ENCODE measurements at regions of chr19 and their contacts with region 1.

Region 1: DNA sequence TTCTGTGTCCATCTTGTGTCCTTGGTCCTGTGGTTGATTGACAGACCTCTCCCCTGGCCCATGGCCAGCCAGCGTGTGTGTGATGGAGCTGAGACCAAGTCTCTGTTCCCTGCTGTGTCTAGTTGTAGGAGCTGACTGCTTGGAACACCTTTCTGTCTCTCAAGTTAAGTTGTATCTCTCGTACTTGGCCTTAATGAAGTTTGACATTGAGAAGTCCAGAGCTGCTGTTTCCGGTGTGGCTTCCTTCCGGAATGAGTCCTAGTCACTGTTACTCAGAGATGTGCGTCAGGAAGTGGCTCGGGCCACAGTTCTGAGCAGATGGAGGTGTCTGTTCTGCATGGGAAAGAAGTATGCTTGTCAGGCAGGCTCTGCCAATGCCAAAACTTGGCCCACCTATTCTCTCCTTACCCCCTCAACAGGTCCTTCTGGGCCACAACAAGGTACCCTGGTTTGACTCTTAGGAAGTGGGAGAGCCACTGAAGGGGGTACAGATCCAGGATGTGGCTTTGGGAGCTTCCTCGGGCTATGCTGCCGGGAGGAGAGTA is 54.3 kb downstream of the GATAD2A start:
- DNase-seq: peak; percentile 80
- H3K4me3 Mint-ChIP-seq: peak overlapping the region; percentile 80
- H3K27ac Mint-ChIP-seq: peak overlapping the region; percentile 98
- H3K4me1 Mint-ChIP-seq: peaks cover 74% of the 10 kb centered on the region
- H3K27me3 Mint-ChIP-seq: no peaks in the 10 kb centered on the region

Region 2: GRCh38 chr19:19444681-19445155 is 15.1 kb before region 1 on chr19:
- CTCF ChIA-PET with region 1: interaction called, 5 read pairs
- POLR2A ChIA-PET with region 1: interaction called, 64 read pairs
- DNase-seq: peak; percentile 62
- H3K4me3 Mint-ChIP-seq: peak overlapping the region; percentile 40
- H3K27ac Mint-ChIP-seq: peak overlapping the region; percentile 89
- H3K4me1 Mint-ChIP-seq: peaks cover 65% of the 10 kb centered on the region
- H3K27me3 Mint-ChIP-seq: no peaks in the 10 kb centered on the region

Region 3: DNA sequence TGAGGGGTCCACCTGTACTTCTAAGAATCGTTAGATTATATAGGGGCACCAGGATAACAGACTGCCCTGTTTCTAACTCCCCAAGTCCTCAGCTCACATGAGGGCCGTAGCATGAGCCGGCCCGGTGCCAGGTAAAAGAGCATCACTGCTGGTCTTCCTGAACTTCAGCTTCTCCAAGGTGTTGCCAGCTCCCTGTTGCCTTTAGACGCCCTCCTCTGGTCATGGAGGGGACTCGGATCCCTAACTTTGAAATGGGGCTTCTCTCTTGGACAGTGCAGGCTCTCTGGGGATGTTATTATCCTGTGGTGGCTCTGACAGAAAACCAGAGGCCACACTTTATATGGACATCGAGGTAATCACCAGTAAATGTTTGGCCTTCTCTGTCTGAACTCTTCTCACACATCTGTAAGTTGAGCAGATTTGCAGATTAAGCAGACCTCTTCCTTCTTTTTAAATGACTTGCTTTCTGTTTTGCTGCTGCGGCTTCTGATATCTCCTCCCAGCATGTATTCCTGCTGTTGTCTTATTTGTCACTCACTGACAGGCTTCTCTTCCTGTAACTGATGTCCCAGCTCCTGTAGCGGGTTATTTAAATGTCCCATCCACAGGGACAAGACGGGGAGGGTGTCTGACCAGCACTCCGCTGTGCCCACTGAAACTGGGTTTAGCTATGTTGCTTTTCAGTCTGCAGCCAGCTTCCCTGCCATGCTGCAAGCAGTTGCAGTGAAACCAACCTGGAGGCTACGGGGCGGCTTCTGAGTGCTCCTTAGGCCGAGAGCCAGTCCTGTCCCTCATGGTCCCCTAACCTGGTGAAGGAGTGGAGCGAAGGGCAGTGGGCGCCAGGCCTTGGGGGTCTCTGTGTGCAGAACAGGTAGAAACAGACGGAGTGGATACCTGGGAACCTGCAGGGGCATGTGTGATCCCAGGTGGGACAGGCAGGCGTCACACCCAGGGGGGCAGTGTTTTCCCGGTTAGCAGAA is 16.4 kb after region 1 on chr19:
- CTCF ChIA-PET with region 1: interaction called, 3 read pairs
- POLR2A ChIA-PET with region 1: interaction called, 30 read pairs
- DNase-seq: no peak
- H3K4me3 Mint-ChIP-seq: no peak overlapping the region
- H3K27ac Mint-ChIP-seq: peak overlapping the region; percentile 84
- H3K4me1 Mint-ChIP-seq: peaks cover 84% of the 10 kb centered on the region
- H3K27me3 Mint-ChIP-seq: no peaks in the 10 kb centered on the region

Region 4: GRCh38 chr19:19502808-19503602 is 43.2 kb after region 1 on chr19:
- CTCF ChIA-PET with region 1: no interaction called
- POLR2A ChIA-PET with region 1: no interaction called
- DNase-seq: no peak
- H3K4me3 Mint-ChIP-seq: no peak overlapping the region
- H3K27ac Mint-ChIP-seq: no peak overlapping the region
- H3K4me1 Mint-ChIP-seq: no peaks in the 10 kb centered on the region
- H3K27me3 Mint-ChIP-seq: no peaks in the 10 kb centered on the region

Region 5: GRCh38 chr19:19884583-19884982 is 424.8 kb after region 1 on chr19:
- CTCF ChIA-PET with region 1: no interaction called
- POLR2A ChIA-PET with region 1: no interaction called
- DNase-seq: no peak
- H3K4me3 Mint-ChIP-seq: no peak overlapping the region
- H3K27ac Mint-ChIP-seq: no peak overlapping the region
- H3K4me1 Mint-ChIP-seq: no peaks in the 10 kb centered on the region
- H3K27me3 Mint-ChIP-seq: no peaks in the 10 kb centered on the region